ENCODE measurements at regions of chr12 and their contacts with region 1.

Region 1: GRCh38 chr12:53098982-53099651 is 1.6 kb downstream of the IGFBP6 start:
- DNase-seq: peak; percentile 95
- H3K4me3 Mint-ChIP-seq: peak overlapping the region; percentile 44
- H3K27ac Mint-ChIP-seq: no peak overlapping the region
- H3K4me1 Mint-ChIP-seq: peaks cover 40% of the 10 kb centered on the region
- H3K27me3 Mint-ChIP-seq: peaks cover 6% of the 10 kb centered on the region

Region 2: DNA sequence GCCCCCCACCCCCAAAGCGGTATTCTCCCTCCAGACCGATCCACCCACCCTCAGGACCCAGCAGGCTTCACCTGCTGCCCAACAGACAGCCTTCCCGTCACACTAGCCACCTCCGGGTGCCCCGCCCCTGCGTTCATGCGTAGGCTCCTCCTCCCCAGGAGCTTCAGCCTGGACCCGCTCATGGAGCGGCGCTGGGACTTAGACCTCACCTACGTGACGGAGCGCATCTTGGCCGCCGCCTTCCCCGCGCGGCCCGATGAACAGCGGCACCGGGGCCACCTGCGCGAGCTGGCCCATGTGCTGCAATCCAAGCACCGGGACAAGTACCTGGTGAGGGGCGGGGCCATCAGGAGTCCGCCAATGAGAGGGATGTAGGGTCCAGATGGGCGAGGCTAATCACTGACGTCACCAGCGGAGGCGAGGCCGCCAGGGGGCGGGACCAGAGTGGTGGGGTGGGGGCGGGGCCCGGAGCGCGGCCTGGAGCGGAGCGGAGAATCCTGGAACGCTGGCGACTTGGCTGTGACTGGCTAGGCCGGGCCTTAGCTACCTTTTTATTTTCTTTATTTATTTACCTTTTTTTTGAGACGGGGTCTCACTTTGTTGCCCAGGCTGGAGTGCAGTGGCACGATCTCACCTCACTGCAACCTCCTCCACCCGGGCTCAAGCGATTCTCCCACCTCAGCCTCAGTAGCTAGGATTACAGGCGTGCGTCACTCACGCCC is 44.8 kb before region 1 on chr12:
- CTCF ChIA-PET with region 1: interaction called, 11 read pairs
- intact Hi-C with region 1: no loop called
- DNase-seq: peak; percentile 95
- H3K4me3 Mint-ChIP-seq: peak overlapping the region; percentile 95
- H3K27ac Mint-ChIP-seq: peak overlapping the region; percentile 83
- H3K4me1 Mint-ChIP-seq: peaks cover 12% of the 10 kb centered on the region
- H3K27me3 Mint-ChIP-seq: no peaks in the 10 kb centered on the region

Region 3: DNA sequence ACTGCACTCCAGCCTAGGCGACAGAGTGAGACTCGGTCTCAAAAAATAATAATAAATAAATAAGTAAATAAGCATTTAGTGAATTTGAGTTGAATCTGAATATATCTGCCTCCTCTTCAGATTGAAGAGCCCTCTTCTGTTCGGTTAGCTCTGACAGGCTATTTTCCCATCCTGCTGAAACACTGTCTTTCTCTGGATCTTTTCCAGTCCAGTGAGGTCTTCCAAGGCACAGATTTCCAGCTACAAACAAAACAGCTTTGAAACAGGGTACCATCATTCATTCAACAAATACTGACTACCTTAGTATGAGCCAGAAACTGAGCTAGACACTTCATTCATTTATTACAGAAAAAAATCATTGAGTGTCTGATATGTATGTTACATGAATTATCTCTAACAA is 12.8 kb before region 1 on chr12:
- CTCF ChIA-PET with region 1: interaction called, 360 read pairs
- intact Hi-C with region 1: no loop called
- DNase-seq: no peak
- H3K4me3 Mint-ChIP-seq: no peak overlapping the region
- H3K27ac Mint-ChIP-seq: no peak overlapping the region
- H3K4me1 Mint-ChIP-seq: peaks cover 7% of the 10 kb centered on the region
- H3K27me3 Mint-ChIP-seq: no peaks in the 10 kb centered on the region

Region 4: DNA sequence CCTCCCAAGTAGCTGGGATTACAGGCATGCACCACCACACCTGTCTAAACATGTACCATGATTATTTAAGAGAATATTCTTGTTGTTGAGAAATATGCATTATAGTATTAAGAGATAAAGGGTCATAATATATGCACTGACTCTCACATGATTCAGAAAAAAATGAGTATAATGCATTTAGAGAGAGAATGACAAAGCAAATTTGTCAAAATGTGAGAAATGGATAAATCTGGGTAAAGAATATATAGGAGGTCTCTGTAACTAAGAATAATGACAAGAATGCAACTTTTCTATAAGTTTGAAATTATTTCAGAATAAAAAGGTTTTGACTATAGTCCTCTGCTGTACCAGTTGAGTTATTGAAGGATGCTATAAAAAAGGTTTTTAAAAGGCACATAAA is 53.3 kb after region 1 on chr12:
- CTCF ChIA-PET with region 1: no interaction called
- intact Hi-C with region 1: no loop called
- DNase-seq: no peak
- H3K4me3 Mint-ChIP-seq: no peak overlapping the region
- H3K27ac Mint-ChIP-seq: no peak overlapping the region
- H3K4me1 Mint-ChIP-seq: no peaks in the 10 kb centered on the region
- H3K27me3 Mint-ChIP-seq: no peaks in the 10 kb centered on the region

Measured in activated naive CD4-positive, alpha-beta T cell treated with anti-CD3 and anti-CD28 coated beads for 36 hours (primary cell).